HEK293 (cell line): ENCODE measurements at regions of chr19 and their contacts with region 1.

Region 1: DNA sequence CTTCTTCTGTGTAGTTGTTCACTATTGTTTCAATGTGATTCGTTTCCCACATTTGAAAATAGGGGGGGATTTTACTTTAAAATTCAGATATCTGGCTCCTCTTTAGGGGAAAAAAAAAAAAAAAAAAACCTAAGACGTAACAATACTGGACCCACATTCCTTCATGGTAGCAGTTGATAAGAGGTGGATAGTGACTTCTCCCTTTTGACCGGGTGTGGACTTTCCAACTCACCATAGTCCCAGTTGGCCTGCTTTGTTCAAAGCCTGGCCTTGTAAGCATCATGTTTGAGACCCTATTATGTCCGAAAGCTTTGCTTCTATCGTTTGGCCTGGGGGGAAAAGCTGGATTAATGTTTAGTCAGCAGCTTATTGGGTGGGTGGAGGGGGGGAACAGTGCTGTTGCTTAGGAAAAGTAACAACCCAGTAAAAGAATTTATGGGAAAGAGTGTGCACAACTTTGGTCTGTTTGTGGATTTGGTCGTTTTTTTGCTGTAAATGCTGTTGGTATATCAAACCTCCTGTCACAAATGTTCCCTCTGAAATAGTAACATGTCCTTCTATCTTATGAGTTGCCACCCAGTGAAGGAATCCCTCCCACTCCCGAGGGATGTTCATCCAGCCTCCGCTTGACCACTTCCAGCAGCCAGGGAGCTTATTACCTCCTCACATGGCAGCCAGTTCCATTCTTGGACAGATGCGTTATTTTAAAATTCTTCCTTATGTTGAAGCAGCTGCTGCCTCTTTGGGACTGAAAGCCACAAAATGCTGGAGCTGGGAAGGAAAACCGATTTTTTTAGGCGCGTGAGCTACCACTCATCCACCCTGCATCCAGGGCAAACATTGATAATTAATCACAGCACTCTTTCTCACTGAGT is 10.4 kb downstream of the SAMD4B start:
- H3K4me3 ChIP-seq: no peak overlapping the region
- H3K27ac ChIP-seq: no peak overlapping the region; the same call in 1 of the 2 replicates
- H3K4me1 ChIP-seq: peaks cover 6% of the 10 kb centered on the region
- CTCF ChIP-seq: no peak

Region 2: DNA sequence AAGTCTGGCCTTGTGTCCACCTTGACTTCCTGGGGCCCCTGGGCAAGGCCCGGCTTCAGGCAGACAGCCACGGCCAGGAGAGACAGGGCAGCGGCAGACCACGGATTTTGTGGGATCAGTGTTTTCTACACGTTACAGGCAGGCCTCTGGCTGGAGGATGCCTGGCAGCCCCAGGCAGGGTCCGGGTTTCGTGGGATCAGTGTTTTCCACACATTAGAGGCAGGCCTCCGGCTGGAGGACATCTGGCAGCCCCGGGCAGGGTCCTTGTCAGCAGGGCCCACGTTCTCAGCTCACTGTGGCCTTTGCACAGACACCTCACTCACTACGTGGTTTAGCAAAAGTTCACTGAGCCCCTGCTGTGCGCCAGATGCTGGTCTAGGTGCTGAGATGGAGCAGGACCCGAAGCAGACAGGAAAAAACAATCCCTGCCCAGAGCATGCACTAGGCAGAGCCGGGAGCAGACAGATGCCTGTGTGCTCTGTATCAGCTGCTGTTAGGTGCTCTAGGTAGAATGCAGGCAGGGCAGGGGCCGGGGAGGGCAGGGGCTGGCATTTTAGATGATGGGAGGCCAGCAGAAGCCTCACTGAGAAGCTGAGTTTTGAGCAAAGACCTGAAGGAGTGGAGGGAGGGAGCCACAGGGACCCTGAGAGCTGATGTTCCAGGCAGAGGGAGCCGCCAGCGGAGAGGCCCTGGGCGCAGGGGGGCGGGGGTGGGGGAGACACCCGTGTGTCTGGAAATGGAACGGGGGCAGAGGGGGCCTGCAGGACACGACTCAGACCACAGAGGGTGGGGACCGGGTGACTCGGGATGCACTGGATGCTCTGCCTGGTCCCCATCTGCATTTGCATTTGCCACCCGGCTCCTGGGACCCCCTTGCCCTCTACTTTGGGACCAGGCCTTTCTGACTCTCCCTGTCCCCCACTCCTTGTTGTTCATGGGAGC is 180.8 kb before region 1 on chr19:
- CTCF ChIA-PET with region 1: no interaction called
- POLR2A ChIA-PET with region 1: no interaction called
- H3K4me3 ChIP-seq: no peak overlapping the region
- H3K27ac ChIP-seq: peak overlapping the region; percentile 31; the same call in 1 of the 2 replicates
- H3K4me1 ChIP-seq: peaks cover 4% of the 10 kb centered on the region
- CTCF ChIP-seq: no peak

Region 3: GRCh38 chr19:39341719-39342604 is 10.7 kb before region 1 on chr19 and contains the start of gene SAMD4B:
- CTCF ChIA-PET with region 1: interaction called, 8 read pairs
- POLR2A ChIA-PET with region 1: interaction called, 14 read pairs
- H3K4me3 ChIP-seq: peak within 1 kb of the TSS; percentile 67
- H3K27ac ChIP-seq: peak within 1 kb of the TSS; percentile 90
- H3K4me1 ChIP-seq: peaks cover 40% of the 10 kb centered on the region
- CTCF ChIP-seq: peak; percentile 98